ENCODE measurements at regions of chr15 and their contacts with region 1.

Region 1: GRCh38 chr15:39782441-39783138 is at the start of gene FSIP1:
- DNase-seq: peak; percentile 98
- ATAC-seq: peak; percentile 100
- total RNA-seq, gene FSIP1: 0.50 to 0.52 TPM

Region 2: GRCh38 chr15:39874890-39875549 is 92.4 kb after region 1 on chr15:
- intact Hi-C with region 1: loop called in 1 of 2 experiments (anchors 5 kb)
- DNase-seq: no peak
- ATAC-seq: no peak

Region 3: DNA sequence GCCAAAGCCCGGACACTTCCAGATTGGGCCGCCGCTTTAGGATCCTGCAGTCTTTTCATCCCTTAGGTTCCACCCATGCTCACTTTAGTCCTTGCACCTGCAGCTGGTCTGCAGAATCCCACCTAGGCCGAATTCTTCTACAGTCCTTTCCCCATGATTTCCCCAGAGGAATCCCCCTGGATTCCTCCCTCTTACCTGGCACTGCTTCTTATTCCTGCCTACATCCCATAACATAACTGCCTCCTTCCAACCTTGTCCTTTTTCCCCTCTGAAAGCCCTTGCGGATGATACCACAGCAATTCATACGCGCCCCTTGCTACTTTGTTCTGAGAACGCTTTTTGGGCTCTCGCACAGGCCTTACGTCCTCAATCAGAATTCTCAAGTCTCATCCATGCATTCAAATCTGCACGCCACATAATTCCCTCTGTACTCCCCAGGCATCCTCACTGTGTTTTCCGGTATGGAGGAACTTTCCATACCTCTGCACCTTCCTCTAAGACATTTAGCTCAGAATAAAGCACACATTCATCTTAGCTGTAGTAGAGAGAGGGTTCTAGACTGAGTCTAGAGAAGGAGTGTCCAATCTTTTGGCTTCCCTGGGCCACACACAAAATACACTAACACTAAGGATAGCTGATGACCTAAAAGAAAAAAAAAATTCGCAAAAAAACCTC is 151.9 kb after region 1 on chr15:
- intact Hi-C with region 1: loop called in 1 of 2 experiments (anchors 10 kb)
- DNase-seq: no peak
- ATAC-seq: peak; percentile 3 to 5

Region 4: DNA sequence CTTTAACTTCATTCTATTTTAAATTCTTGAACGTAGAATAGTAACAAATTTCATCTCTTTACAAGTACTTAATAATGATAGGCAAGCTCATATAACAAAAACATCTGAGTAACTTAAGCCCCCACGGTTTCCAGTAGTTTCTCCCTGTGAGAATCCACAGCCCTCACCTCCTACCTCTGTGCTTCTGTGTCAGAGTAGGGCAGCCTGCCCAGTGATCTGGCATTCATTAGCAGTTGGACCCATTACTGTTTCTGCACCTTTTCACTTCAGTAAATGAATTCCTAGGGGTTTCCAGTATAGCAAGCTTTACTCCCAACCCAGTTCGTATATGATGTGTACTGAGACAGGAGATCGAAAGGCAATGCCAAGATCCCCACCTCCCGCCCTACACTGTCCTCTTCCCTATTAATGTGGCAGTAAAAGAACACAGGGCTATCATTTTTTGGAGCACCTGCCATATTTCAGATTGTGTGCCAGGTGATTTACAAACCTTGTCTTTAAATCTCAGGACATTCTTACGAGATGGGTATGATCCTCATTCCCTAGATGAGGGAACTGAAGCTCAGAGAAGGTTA is 192.2 kb after region 1 on chr15:
- intact Hi-C with region 1: loop called in 1 of 2 experiments (anchors 5 kb)
- DNase-seq: no peak
- ATAC-seq: no peak

Measured in left cardiac atrium (tissue), 4 donors.